HepG2 (cell line): ENCODE measurements at regions of chr4 and their contacts with region 1.

Region 1: DNA sequence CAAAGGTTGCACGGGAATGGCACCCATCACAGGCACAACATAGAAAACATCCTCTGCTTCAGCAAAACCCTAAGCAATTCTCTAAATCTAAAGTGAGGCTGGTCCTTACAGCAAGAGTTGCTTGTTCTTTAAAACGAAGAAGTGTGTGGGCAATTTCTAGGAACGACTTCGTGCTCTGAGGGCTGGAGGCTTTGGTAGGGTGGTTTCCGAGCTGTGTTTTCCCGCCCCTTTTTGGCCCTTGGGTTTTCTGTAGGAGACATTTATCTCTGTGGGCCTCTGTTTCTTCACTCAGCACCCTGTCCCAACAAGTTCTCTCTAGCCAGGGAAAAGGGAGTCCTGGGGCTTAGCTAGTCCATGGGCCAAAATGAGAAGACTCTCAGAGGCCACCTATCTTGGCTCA is 84.2 kb downstream of the SLC2A9 start:
- DNase-seq: no peak
- ATAC-seq: no peak
- H3K4me3 ChIP-seq: no peak overlapping the region
- H3K27ac ChIP-seq: no peak overlapping the region
- H3K4me1 ChIP-seq: no peaks in the 10 kb centered on the region
- H3K27me3 ChIP-seq: no peaks in the 10 kb centered on the region
- CTCF ChIP-seq: no peak
- EP300 ChIP-seq: no peak
- POLR2A ChIP-seq: no peak
- RAD21 ChIP-seq: no peak

Region 2: GRCh38 chr4:9877123-9877522 is 60.0 kb before region 1 on chr4:
- CTCF ChIA-PET with region 1: no interaction called
- POLR2A ChIA-PET with region 1: no interaction called
- in situ Hi-C with region 1: no loop called
- intact Hi-C with region 1: loop called (anchors 2 kb)
- DNase-seq: no peak
- ATAC-seq: peak; percentile 45
- H3K4me3 ChIP-seq: no peak overlapping the region
- H3K27ac ChIP-seq: no peak overlapping the region
- H3K4me1 ChIP-seq: no peaks in the 10 kb centered on the region
- H3K27me3 ChIP-seq: no peaks in the 10 kb centered on the region
- CTCF ChIP-seq: no peak
- EP300 ChIP-seq: no peak
- POLR2A ChIP-seq: no peak
- RAD21 ChIP-seq: no peak